Tibial artery (tissue), 4 donors: ENCODE measurements at regions of chr3 and their contacts with region 1.

Region 1: DNA sequence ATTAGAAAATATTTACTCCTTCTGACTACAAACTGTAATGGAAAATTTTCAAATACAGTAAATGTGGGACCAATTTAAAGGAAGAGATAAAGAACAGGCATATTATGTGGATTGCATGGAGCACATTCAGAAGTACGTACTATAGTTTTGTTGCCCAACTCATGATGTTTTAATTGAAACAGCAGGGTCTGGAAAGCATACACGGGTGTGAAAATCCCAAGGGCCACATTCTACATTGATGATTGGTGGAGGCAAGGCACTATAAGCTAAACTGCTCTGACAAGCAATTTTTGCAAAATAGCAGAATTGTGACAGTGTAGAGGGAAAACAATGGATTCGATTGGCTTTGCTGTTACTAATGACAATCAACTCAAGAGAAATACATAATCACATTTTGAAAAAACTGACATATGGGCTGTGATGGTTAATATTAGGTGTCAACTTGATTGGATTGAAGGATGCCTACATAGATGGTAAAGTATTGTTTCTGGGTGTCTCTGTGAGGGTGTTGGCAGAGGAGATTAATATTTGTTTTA is 458.6 kb downstream of the PYDC2 start:
- DNase-seq: no peak
- H3K4me3 ChIP-seq: no peak overlapping the region
- H3K27ac ChIP-seq: no peak overlapping the region
- H3K4me1 ChIP-seq: no peaks in the 10 kb centered on the region
- H3K27me3 ChIP-seq: no peaks in the 10 kb centered on the region
- CTCF ChIP-seq: no peak

Region 2: DNA sequence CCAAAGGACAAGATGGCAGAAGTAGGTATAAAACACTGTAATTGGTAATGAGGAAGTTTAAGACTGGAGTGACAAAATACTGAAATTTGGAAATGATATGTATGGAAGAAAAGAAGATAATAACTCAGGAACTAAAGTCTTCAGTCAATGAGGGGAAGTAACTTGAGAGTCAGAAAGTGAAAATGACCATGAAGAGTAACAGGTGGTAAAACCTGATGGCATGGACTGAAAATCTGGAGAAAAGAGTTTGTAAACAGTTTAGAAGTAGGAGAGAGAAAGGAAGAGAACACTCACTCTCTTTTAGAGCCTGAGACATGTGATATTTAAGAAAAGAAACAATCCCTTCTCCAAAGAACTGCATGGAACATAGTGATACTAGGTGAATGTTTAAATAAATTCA is 70.7 kb before region 1 on chr3:
- intact Hi-C with region 1: no loop called
- DNase-seq: no peak
- H3K4me3 ChIP-seq: no peak overlapping the region
- H3K27ac ChIP-seq: no peak overlapping the region
- H3K4me1 ChIP-seq: no peaks in the 10 kb centered on the region
- H3K27me3 ChIP-seq: no peaks in the 10 kb centered on the region
- CTCF ChIP-seq: no peak

Region 3: DNA sequence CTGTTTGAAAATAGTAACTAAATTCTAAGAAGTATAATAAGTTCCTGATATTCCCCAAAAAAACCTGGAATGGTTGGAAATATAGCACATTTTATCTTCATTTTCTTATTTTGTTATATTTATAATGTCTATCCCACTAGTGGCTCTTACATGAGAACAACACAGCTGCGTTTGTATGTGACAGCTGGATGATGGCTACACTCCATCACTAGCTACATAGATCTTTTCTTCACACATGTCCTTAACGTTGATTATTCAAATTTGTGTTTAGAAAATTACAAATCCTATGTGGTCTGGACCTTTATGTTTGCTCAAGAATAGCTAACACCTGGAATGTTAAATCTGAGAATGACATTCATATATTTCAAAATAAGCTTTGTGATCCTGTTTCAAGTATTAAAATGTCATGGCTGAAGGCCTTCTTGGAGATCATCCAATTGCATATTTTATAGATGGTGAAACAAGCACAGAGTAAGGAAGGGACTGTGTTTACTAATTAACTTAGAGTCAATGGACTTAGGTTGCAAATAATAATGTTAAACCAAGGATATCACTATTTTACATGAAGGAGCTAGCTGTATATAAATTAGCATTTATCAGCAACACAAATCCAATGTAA is 1398.2 kb after region 1 on chr3:
- intact Hi-C with region 1: loop called (anchors 5 kb)
- DNase-seq: no peak
- H3K4me3 ChIP-seq: no peak overlapping the region
- H3K27ac ChIP-seq: no peak overlapping the region
- H3K4me1 ChIP-seq: no peaks in the 10 kb centered on the region
- H3K27me3 ChIP-seq: no peaks in the 10 kb centered on the region
- CTCF ChIP-seq: no peak